Dendritic cell treated with granulocyte-macrophage colony-stimulating factor and Interleukin-4, amounts not matched to agents 40 ng/mL and 50 ng/mL, for 4 days (primary cell): ENCODE measurements at regions of chr12 and their contacts with region 1.

Region 1: DNA sequence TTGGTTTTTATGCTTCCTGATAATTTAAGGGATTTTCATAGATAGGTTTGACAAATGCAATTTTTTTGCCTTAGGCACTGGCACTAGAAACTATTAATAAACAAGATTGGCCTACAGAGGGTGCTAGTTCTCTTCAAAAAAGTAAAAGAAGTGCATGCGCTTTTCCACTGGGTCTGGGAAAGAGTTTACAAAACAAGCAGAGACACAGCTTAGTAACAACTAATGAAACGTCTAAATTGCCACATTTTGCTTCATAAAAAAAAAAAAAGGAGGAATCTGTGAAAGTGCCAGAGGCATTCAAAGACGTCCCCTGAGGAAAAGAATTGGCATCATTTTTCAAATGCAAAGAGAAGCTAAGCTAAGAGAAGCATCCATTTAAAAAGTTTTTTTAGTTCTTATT is 58.3 kb upstream of the EEA1 start:
- H3K4me3 Mint-ChIP-seq: peak overlapping the region; percentile 42
- H3K27ac Mint-ChIP-seq: peak overlapping the region; percentile 92
- H3K4me1 Mint-ChIP-seq: peaks cover 8% of the 10 kb centered on the region
- H3K27me3 Mint-ChIP-seq: no peaks in the 10 kb centered on the region

Region 2: DNA sequence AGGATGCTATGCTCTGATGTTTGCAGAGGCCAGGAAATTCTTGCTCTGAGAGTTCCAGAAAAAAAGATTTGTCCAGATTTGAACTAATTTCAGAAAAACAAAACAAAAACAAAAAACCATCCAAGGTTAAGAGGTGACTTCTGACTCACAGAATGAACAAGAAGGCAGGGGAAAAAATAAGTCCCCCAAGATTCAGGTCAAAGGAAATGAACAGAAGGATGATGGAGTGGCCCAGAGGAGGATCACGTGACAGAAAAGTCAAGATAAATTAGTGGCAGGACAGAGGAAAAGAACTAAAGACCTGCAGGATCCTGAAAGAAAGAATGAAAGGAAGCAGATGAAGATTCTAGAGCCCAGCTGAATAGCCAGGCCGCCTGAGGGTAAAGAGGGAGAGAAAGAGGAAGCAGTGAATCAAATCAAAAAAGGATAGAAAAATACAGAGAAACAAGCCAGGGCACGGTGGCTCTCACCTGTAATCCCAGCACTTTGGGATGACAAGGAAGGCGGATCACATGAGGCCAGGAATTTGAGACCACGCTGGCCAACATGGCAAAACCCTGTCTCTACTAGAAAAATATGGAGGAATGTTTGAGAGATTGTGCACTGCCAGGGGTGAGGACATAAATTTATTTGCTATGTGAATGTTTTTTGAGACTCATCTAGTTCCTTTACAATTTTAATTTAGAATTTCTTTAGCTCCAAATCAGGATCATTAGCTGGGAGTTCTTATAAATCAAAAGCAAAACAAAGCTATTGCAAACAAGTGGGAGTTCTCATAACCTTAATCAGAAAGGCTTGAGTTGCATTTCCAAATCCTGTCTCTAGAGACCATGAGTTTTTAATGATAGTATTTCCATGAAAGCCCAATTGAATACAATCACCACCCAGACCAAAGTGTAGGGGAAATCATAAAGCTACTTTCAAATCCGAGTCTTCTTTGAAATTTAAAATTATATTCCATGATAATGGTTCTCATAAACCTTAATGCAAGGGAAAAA is 501.7 kb before region 1 on chr12:
- intact Hi-C with region 1: no loop called
- H3K4me3 Mint-ChIP-seq: no peak overlapping the region
- H3K27ac Mint-ChIP-seq: no peak overlapping the region
- H3K4me1 Mint-ChIP-seq: peaks cover 12% of the 10 kb centered on the region
- H3K27me3 Mint-ChIP-seq: no peaks in the 10 kb centered on the region

Region 3: DNA sequence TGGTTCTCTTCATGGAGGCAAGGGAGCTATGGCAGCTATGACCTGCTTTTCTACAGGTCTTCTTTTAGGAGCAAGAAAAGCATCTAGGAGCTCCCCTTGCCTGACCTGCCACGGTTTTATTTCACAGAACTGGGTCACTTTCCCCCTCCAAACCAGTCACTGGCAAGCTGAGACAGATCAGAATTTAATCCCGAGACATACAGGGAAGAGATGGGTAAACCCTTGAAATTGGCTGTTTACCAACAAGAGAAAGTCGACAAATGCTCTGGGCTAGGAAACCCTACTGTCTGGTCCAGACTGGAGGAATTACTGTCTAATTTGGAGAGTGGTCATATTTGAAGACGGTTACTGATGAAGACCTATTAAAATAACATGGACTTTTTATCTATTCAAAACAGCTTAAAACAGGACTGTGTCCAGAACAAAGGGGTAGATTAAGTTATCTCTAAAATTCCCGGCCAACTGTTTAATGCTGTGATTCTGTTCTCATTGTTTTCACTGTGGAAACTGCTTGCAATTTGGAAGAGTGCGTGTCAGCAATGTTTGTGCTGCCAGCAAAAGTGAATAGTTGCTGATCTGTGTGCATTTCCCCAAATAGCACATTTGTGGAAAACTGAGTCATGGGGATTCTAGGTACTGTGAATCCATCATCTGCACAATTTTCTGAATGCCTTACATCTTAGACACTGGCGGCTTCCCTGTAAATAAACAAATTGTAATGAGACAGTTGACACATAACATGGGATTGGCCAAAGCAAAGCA is 15.1 kb after region 1 on chr12:
- intact Hi-C with region 1: loop called (anchors 2 kb)
- H3K4me3 Mint-ChIP-seq: no peak overlapping the region
- H3K27ac Mint-ChIP-seq: peak overlapping the region; percentile 71
- H3K4me1 Mint-ChIP-seq: peaks cover 13% of the 10 kb centered on the region
- H3K27me3 Mint-ChIP-seq: no peaks in the 10 kb centered on the region

Region 4: DNA sequence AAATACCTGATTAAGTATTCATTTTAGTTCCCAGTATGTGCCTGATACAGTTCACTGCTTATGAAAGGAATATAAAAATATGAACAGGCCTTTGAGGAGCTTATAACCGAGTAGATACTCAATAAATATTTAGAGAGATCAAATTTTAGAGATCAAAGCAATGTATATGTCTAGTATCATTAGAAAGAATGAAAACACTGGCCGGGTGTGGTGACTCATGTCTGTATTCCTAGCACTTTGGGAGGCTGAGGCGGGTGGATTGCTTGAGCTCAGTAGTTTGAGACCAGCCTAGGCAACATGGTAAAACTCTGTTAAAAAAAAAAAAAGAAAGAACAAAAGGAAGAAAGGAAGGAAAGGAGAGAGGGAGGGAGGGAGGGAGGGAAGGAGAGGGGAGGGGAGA is 54.9 kb after region 1 on chr12:
- intact Hi-C with region 1: no loop called
- H3K4me3 Mint-ChIP-seq: no peak overlapping the region
- H3K27ac Mint-ChIP-seq: no peak overlapping the region
- H3K4me1 Mint-ChIP-seq: no peaks in the 10 kb centered on the region
- H3K27me3 Mint-ChIP-seq: no peaks in the 10 kb centered on the region

Region 5: GRCh38 chr12:93214523-93215289 is 227.3 kb after region 1 on chr12:
- intact Hi-C with region 1: no loop called
- H3K4me3 Mint-ChIP-seq: no peak overlapping the region
- H3K27ac Mint-ChIP-seq: no peak overlapping the region
- H3K4me1 Mint-ChIP-seq: peaks cover 9% of the 10 kb centered on the region
- H3K27me3 Mint-ChIP-seq: no peaks in the 10 kb centered on the region

Region 6: GRCh38 chr12:93378373-93379325 is 391.3 kb after region 1 on chr12:
- intact Hi-C with region 1: loop called (anchors 5 kb)
- H3K4me3 Mint-ChIP-seq: peak overlapping the region; percentile 99
- H3K27ac Mint-ChIP-seq: peak overlapping the region; percentile 95
- H3K4me1 Mint-ChIP-seq: peaks cover 62% of the 10 kb centered on the region
- H3K27me3 Mint-ChIP-seq: no peaks in the 10 kb centered on the region

Region 7: DNA sequence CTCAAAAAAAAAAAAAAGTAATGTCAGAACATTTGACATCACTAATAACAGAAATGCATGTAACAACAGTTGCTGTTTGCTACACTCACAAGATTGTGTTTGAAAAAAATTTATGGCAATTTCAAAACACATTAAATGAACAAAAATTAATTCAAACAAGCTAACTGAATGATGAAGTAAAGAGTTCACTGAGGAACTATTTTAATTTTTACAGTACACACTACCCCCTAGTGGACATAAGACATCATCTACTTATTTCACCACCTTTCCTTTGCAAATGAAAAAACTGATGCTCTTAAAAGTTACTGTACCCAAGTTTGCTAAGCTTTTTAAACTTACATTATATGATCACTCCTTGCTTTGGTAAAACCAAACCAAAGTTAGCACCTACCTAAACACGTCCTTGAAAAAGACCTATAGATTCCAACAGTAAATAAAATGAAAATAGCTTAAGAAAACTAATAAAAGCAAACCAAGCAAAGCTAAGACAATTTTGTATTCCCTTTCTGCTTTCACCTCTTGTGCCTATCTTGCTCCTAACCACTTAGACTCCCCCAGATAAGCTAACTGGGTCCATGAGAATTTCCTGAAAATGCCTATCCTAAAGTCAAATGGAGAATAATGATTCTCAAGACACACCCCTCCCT is 432.1 kb after region 1 on chr12:
- intact Hi-C with region 1: loop called (anchors 2 kb)
- H3K4me3 Mint-ChIP-seq: no peak overlapping the region
- H3K27ac Mint-ChIP-seq: no peak overlapping the region
- H3K4me1 Mint-ChIP-seq: peaks cover 44% of the 10 kb centered on the region
- H3K27me3 Mint-ChIP-seq: no peaks in the 10 kb centered on the region